Activated B cell treated with CpG ODN at 0.5 μM for 24 hours (primary cell): ENCODE measurements at regions of chr6 and their contacts with region 1.

Region 1: GRCh38 chr6:135497412-135498269 is at the start of gene AHI1:
- DNase-seq: peak; percentile 95
- ATAC-seq: peak; percentile 91
- H3K4me3 Mint-ChIP-seq: no peak within 1 kb of the TSS
- H3K27ac Mint-ChIP-seq: no peak within 1 kb of the TSS
- H3K4me1 Mint-ChIP-seq: peaks cover 8% of the 10 kb centered on the region
- H3K27me3 Mint-ChIP-seq: no peaks in the 10 kb centered on the region
- CTCF ChIP-seq: no peak
- total RNA-seq, gene AHI1: 18.2 and 21.0 TPM in 2 replicates

Region 2: GRCh38 chr6:133952815-133953633 is 1544.6 kb before region 1 on chr6 and contains the start of gene TBPL1:
- CTCF ChIA-PET with region 1: no interaction called
- POLR2A ChIA-PET with region 1: no interaction called
- intact Hi-C with region 1: loop called (anchors 1 kb)
- DNase-seq: peak; percentile 83
- ATAC-seq: peak; percentile 84
- H3K4me3 Mint-ChIP-seq: peak within 1 kb of the TSS; percentile 95
- H3K27ac Mint-ChIP-seq: peak within 1 kb of the TSS; percentile 98
- H3K4me1 Mint-ChIP-seq: peaks cover 53% of the 10 kb centered on the region
- H3K27me3 Mint-ChIP-seq: no peaks in the 10 kb centered on the region
- CTCF ChIP-seq: no peak
- total RNA-seq, gene TBPL1: 33.0 and 35.7 TPM in 2 replicates

Region 3: DNA sequence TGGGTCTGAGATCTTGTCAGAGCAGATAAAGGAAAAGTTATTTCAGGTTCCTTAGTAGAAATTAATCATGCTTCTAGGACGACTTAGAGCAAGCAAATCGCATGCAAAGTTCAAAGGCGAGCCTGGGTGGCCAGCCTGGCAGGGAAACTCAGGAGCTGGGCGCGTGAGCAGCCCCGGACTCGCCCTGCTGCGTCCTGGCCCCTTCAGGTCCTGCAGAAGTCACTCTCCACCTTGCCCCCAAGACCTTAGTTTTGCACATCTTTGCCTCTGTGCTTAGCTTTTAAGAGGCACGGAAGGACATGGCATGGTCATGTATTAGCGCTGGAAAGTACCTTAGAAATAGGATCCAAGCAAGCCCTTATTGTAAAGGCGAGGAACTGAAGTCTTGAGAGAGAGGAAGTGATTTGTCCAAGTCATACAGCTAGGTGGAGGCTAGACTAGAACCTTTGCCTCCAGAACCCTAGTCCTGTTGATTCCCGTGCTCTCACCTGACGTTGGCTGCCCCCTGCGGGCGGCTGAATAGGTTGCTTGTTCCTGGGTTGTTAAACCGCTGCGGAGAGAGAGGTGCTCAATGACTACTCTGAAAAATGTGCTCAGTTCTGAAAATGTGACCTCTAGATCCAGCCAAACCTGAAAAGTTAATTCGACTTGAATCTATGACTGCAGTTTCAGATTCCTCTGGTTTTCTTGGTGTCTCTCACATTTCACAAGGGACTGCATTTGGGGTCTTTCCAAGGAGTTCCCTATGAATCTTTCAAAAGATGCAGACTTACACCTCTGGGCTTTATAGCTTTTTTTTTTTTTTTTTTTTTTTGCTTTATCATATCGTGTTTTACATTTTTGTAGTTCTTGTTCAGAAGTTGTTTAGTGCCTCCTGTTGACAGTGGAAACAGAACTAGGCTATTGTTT is 313.9 kb before region 1 on chr6:
- CTCF ChIA-PET with region 1: no interaction called
- POLR2A ChIA-PET with region 1: no interaction called
- intact Hi-C with region 1: loop called (anchors 1 kb)
- DNase-seq: peak; percentile 48
- ATAC-seq: peak; percentile 38
- H3K4me3 Mint-ChIP-seq: peak overlapping the region; percentile 87
- H3K27ac Mint-ChIP-seq: peak overlapping the region; percentile 57
- H3K4me1 Mint-ChIP-seq: peaks cover 30% of the 10 kb centered on the region
- H3K27me3 Mint-ChIP-seq: no peaks in the 10 kb centered on the region
- CTCF ChIP-seq: no peak

Region 4: DNA sequence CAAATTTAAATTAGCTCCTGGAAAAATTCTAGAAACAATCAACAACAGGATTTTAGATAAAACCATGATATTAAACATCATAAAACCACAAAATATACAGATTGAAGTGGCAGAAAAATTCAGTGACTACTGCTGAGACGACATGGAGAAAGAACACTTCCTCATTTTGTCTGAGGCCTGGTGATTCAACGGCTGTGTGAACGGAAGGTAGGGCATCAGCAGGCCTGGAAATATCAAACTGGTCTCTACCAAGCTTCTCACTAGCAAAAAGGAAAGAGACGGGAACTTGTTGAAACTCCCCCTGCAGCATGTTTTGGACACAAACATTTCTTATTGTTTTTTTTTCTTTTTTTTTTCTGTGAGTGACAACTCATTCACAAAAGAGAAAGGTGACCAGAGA is 57.9 kb after region 1 on chr6:
- CTCF ChIA-PET with region 1: no interaction called
- POLR2A ChIA-PET with region 1: no interaction called
- intact Hi-C with region 1: no loop called
- DNase-seq: no peak
- ATAC-seq: peak; percentile 83
- H3K4me3 Mint-ChIP-seq: no peak overlapping the region
- H3K27ac Mint-ChIP-seq: no peak overlapping the region
- H3K4me1 Mint-ChIP-seq: peaks cover 11% of the 10 kb centered on the region
- H3K27me3 Mint-ChIP-seq: peaks cover 2% of the 10 kb centered on the region
- CTCF ChIP-seq: no peak

Region 5: DNA sequence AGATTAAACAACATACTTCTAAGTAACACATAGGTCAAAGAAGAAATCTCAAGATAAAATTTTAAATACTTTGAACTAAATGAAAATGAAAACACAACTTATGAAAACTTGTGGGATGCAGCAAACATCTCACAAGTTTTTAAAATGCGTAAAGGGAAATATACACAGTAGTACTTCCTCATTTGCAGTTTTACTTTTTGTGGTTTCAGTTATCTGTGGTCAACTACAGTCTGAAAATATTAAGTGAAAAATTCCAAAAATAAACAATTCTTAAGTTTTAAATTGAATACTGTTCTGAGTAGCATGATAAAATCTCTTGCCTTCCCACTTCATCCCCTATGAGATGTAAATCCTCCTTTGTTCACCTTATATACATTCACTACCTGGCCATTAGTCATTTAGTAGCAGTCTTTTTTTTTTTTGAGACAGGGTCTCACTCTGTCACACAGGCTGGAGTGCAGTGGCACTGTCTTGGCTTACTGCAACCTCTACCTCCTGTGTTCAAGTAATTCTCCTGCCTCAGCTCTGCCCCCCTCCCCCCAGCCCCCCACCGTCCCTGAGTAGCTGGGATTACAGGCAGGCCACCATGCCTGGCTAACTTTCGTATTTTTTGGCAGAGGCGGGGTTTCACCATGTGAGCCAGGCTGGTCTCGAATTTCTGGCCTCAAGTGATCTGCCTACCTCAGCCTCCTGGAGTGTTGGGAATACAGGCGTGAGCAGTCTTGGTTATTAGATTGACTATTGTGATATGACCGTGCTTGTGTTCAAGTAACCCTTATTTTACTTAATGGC is 154.5 kb after region 1 on chr6:
- CTCF ChIA-PET with region 1: no interaction called
- POLR2A ChIA-PET with region 1: no interaction called
- intact Hi-C with region 1: loop called (anchors 2 kb)
- DNase-seq: no peak
- ATAC-seq: peak; percentile 82
- H3K4me3 Mint-ChIP-seq: peak overlapping the region; percentile 49
- H3K27ac Mint-ChIP-seq: peak overlapping the region; percentile 76
- H3K4me1 Mint-ChIP-seq: peaks cover 22% of the 10 kb centered on the region
- H3K27me3 Mint-ChIP-seq: no peaks in the 10 kb centered on the region
- CTCF ChIP-seq: no peak

Region 6: DNA sequence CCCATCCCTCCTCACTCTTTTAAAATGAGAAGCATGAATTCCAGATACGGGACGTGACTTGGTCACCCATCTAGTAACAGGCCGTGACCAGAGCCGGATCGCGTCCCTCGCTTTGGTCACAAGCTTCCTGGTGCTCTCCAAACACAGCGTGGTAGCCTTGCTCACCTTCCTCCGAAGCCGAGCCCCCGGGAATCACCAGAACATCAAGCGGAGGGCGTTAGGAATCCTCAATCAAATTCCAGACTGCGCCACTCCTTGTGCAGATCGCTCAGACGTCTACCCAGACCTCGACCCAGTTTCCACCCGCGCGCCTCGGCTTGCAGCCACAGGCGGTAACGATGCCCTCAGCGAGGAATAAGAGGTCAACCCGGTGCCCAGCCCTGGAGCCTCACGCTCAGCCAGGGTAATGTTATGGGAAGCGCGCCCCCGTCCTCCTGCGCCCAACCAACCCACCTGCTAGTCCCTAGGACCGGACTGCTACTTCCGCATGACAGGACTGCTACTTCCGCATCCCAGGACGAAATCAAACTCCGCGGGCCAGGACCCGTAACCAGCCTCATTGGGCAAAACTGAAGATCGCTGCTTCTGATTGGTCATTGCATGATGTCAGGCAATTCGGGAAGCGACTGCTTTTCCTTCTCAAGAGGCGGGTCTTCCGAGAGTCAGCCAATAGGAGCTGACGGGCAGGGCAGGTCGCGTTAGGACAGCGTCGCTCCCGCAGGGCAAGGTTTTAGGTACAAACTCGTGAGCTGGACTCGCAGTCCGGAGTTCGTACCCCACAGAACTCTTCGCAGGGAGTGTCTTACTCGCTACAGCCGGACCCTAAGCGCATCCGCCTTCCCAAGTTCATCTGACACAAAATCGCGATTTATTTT is 752.4 kb after region 1 on chr6 and contains the start of gene MTFR2:
- CTCF ChIA-PET with region 1: no interaction called
- POLR2A ChIA-PET with region 1: interaction called, 9 read pairs
- intact Hi-C with region 1: loop called (anchors 1 kb)
- DNase-seq: peak; percentile 74
- ATAC-seq: peak; percentile 97
- H3K4me3 Mint-ChIP-seq: peak within 1 kb of the TSS; percentile 89
- H3K27ac Mint-ChIP-seq: peak within 1 kb of the TSS; percentile 57
- H3K4me1 Mint-ChIP-seq: peaks cover 27% of the 10 kb centered on the region
- H3K27me3 Mint-ChIP-seq: no peaks in the 10 kb centered on the region
- CTCF ChIP-seq: no peak
- total RNA-seq, gene MTFR2: 2.5 and 3.5 TPM in 2 replicates

Region 7: DNA sequence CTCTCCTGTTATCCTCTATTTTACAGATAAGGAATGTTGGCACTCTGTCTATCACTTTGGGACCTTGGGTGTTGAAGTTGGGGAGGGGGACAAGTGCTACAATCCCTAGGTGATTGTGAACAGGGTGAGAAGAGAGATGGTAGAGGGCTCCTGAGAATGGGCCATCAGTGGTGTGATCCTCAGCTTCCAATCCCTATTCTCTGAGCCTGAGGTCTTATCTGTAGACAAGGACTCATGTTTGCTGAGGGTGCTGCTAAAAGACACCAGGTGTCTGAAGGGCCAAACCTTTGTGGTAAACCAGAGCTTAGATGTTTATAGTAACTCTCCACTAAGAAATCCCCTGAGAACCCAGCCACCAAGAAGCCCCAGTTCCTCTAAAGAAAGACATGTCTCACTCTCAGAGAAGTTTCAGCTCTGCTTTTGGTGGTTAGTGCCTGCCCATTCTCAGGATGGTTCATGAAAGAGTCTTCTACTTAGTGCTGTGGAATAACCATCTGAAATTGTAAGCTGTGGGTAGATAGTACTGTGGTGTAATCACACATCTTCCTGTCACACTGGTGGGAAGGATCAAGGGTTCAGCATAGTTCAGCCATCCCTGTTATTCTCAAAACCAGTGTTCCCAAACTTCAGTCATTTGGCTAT is 1605.3 kb after region 1 on chr6:
- CTCF ChIA-PET with region 1: no interaction called
- POLR2A ChIA-PET with region 1: no interaction called
- intact Hi-C with region 1: loop called (anchors 5 kb)
- DNase-seq: no peak
- ATAC-seq: peak; percentile 81
- H3K4me3 Mint-ChIP-seq: peak overlapping the region; percentile 80
- H3K27ac Mint-ChIP-seq: peak overlapping the region; percentile 98
- H3K4me1 Mint-ChIP-seq: peaks cover 93% of the 10 kb centered on the region
- H3K27me3 Mint-ChIP-seq: no peaks in the 10 kb centered on the region
- CTCF ChIP-seq: no peak